Heart left ventricle (tissue), 16 donors: ENCODE measurements at regions of chr1 and their contacts with region 1.

Region 1: GRCh38 chr1:40939320-40940059 is 40.0 kb upstream of the CTPS1 start:
- DNase-seq: peak in 1 of 5 donors; percentile 65
- ATAC-seq: peak; percentile 65 to 92 (median 86)
- H3K4me3 ChIP-seq: no peak overlapping the region
- H3K27ac ChIP-seq: peak overlapping the region in 2 of 12 donors; percentile 29 to 47
- H3K4me1 ChIP-seq: peaks cover 0 to 11% (median 4%) of the 10 kb centered on the region in 12 donors
- H3K27me3 ChIP-seq: no peaks in the 10 kb centered on the region
- CTCF ChIP-seq: no peak
- POLR2A ChIP-seq: no peak

Region 2: GRCh38 chr1:40870135-40870728 is 69.3 kb before region 1 on chr1:
- intact Hi-C with region 1: loop called in 1 of 10 experiments (anchors 5 kb)
- DNase-seq: no peak
- ATAC-seq: no peak
- H3K4me3 ChIP-seq: no peak overlapping the region
- H3K27ac ChIP-seq: no peak overlapping the region
- H3K4me1 ChIP-seq: peaks cover 0 to 5% (median under 1%) of the 10 kb centered on the region in 12 donors
- H3K27me3 ChIP-seq: no peaks in the 10 kb centered on the region
- CTCF ChIP-seq: no peak
- POLR2A ChIP-seq: no peak

Region 3: DNA sequence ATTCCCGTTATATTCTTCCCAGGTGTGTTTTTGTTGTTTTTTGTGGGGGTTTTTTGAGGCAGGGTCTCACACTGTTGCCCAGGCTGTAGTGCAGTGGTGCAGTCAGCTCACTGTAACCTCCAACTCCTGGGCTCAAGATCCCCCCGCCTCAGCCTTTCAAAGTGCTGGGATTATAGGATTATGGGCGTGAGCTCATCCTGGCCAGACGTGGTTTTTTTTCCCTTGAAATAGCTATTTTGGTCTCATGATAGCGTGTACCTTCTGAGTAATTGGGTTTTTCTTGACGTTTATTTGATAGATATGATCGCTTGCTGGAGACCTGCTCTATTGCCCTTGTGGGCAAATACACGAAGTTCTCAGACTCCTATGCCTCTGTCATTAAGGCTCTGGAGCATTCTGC is 57.6 kb after region 1 on chr1:
- intact Hi-C with region 1: no loop called
- DNase-seq: no peak
- ATAC-seq: no peak
- H3K4me3 ChIP-seq: no peak overlapping the region
- H3K27ac ChIP-seq: no peak overlapping the region
- H3K4me1 ChIP-seq: no peaks in the 10 kb centered on the region
- H3K27me3 ChIP-seq: no peaks in the 10 kb centered on the region
- CTCF ChIP-seq: no peak
- POLR2A ChIP-seq: no peak